Endothelial cell of umbilical vein (primary cell): ENCODE measurements at regions of chr9 and their contacts with region 1.

Region 1: GRCh38 chr9:12191630-12192029 is 501.6 kb upstream of the TYRP1 start:
- DNase-seq: no peak
- H3K4me3 ChIP-seq: no peak overlapping the region
- H3K27ac ChIP-seq: no peak overlapping the region
- H3K4me1 ChIP-seq: no peaks in the 10 kb centered on the region
- H3K27me3 ChIP-seq: no peaks in the 10 kb centered on the region
- CTCF ChIP-seq: no peak
- POLR2A ChIP-seq: no peak

Region 2: DNA sequence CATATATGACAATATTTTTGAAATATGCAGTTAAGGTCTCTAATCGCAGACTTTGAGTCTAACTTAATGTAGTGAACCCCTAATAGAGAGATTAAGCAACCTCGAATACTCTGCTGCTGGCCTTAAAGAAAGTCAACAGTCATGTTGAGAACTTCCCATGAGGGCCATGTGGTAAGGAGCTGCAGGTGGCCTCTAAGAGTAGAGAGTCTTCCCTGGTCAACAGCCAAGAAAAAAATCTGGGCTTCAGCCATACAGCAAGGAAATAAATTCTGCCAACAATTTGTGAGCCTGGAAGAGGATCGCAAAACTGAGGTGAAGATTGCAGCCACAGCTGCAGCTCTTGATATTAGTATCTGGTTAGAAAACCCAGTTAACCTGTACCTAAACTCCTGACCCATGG is 433.6 kb before region 1 on chr9:
- CTCF ChIA-PET with region 1: no interaction called
- POLR2A ChIA-PET with region 1: no interaction called
- dilution Hi-C with region 1: no loop called
- intact Hi-C with region 1: loop called (anchors 5 kb)
- DNase-seq: no peak
- H3K4me3 ChIP-seq: no peak overlapping the region
- H3K27ac ChIP-seq: no peak overlapping the region
- H3K4me1 ChIP-seq: no peaks in the 10 kb centered on the region
- H3K27me3 ChIP-seq: no peaks in the 10 kb centered on the region
- CTCF ChIP-seq: no peak
- POLR2A ChIP-seq: no peak